ENCODE measurements at regions of chr20 and their contacts with region 1.

Region 1: DNA sequence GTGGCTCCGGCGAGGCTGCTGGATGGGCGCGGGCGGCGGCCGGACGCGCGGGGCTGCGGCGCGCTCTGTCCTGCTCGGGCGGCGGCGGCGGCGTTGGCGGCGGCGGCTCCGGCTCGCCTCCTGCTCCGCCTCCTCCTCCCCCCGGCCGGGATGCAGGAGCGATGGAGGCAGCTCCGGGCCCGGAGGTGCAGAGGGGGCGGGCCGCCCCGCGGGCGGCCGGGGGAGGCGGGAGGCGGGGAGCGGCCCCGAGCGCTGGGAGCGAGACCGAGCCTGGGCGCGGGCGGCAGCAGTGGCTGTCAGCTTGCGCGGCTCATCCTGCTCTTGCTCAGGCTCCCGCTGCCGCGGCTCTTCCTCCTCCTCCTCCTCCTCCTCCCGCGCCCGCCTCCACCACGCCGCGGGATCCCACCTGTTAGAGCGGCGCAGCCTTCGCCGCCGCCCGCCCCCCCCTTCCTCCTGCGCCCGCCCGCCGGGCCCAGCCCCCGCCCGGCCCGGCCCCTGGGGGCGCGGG is at the start of gene NOL4L:
- DNase-seq: peak; percentile 27 to 57 (median 37)
- H3K4me3 ChIP-seq: peak within 1 kb of the TSS; percentile 29 to 61
- H3K4me3 Mint-ChIP-seq: peak within 1 kb of the TSS; percentile 88 to 97 (median 91)
- H3K27ac ChIP-seq: peak within 1 kb of the TSS; percentile 49
- H3K27ac Mint-ChIP-seq: peak within 1 kb of the TSS; percentile 86 to 99 (median 92)
- H3K4me1 ChIP-seq: peaks cover 44% of the 10 kb centered on the region
- H3K4me1 Mint-ChIP-seq: peaks cover 14 to 26% (median 23%) of the 10 kb centered on the region in 4 donors
- H3K27me3 ChIP-seq: no peaks in the 10 kb centered on the region
- H3K27me3 Mint-ChIP-seq: no peaks in the 10 kb centered on the region
- total RNA-seq, gene NOL4L: 71.0 to 74.2 TPM

Region 2: GRCh38 chr20:32574296-32575226 is 10.5 kb before region 1 on chr20:
- CTCF ChIA-PET with region 1: no interaction called
- POLR2A ChIA-PET with region 1: interaction called, 11 read pairs
- intact Hi-C with region 1: no loop called
- DNase-seq: peak in 1 of 5 donors; percentile 48
- H3K4me3 ChIP-seq: no peak overlapping the region
- H3K4me3 Mint-ChIP-seq: no peak overlapping the region
- H3K27ac ChIP-seq: no peak overlapping the region
- H3K27ac Mint-ChIP-seq: peak overlapping the region in 5 of 7 donors; percentile 44 to 83 (median 75)
- H3K4me1 ChIP-seq: peaks cover 96% of the 10 kb centered on the region
- H3K4me1 Mint-ChIP-seq: peaks cover 0 to 46% (median 22%) of the 10 kb centered on the region in 4 donors
- H3K27me3 ChIP-seq: no peaks in the 10 kb centered on the region
- H3K27me3 Mint-ChIP-seq: no peaks in the 10 kb centered on the region

Measured in CD4-positive, alpha-beta memory T cell (primary cell).